ENCODE measurements at regions of chr21 and their contacts with region 1.

Region 1: DNA sequence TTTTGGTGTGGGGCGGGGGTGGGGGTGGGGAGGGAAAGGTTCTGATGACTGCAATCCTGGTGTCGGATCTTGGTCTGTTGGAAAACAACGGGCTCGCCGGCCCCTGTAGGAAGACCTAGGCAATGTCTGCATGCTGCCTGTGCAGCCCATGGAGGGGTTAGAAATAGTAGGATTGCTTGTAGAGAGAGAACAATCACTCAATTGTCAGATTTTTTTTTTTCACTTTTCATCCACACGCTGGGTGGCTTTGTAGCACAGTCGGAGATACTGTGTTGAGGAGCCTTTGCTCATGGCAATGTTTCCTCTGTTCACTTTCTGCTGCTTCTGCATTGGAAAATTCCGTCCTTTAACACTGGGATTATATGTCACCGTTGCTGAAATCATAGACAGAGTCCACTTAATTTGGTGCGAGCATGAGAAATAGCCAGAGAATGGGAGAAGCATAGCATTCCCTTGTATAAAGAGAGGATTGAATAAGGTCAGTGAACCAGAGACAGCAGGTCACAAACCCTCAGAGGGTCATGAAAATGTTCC is 107.5 kb downstream of the MRPS6 start:
- DNase-seq: no peak
- H3K4me3 ChIP-seq: no peak overlapping the region
- H3K27ac ChIP-seq: no peak overlapping the region
- H3K4me1 ChIP-seq: no peaks in the 10 kb centered on the region
- H3K27me3 ChIP-seq: no peaks in the 10 kb centered on the region
- CTCF ChIP-seq: no peak
- EP300 ChIP-seq: no peak
- POLR2A ChIP-seq: no peak

Region 2: GRCh38 chr21:33774551-33774950 is 406.3 kb before region 1 on chr21:
- intact Hi-C with region 1: loop called in 1 of 4 experiments (anchors 5 kb)
- DNase-seq: no peak
- H3K4me3 ChIP-seq: no peak overlapping the region
- H3K27ac ChIP-seq: no peak overlapping the region
- H3K4me1 ChIP-seq: no peaks in the 10 kb centered on the region
- H3K27me3 ChIP-seq: no peaks in the 10 kb centered on the region
- CTCF ChIP-seq: no peak
- EP300 ChIP-seq: no peak
- POLR2A ChIP-seq: no peak

Region 3: DNA sequence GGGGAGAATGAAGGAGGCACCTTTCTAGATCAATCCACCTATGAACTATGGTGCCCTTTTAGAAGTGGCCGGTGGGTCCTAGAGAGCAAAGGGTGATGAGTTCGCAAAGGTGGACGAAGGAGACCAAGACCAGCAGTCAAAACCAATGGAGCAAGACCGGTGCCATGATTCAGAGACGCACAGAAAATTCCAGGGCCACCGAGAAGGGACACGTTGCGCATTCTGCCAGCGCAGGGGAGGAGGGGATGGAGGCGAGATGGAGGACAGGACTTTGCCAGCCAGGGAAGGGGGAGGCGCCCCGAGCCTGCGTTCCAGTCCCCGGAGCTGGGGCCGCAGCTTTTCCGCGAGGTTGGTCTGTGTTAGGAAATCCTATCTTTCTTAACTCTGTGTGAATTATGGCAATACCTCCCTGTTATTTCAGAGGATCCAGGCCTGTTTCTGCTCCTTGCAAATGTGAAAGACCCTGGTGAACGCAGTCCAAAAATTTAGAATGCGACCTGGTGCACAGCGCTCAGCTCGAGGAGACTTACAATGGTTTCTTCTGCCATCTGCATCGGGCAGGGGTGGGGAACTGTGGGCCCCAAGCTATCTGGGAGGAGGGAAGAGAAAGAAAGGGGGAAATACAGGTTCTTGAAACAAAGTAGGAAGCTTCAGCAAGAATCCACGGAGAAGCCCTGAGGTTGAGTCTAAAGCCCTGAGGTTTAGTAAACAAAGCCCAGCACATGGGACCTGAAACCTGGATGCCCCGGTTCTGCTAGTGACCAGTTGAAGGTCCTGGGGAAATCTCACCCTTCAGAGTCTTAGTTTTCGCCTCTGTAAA is 21.9 kb after region 1 on chr21:
- intact Hi-C with region 1: no loop called
- DNase-seq: peak in 2 of 5 donors; percentile 31 to 43
- H3K4me3 ChIP-seq: no peak overlapping the region
- H3K27ac ChIP-seq: no peak overlapping the region
- H3K4me1 ChIP-seq: no peaks in the 10 kb centered on the region
- H3K27me3 ChIP-seq: no peaks in the 10 kb centered on the region
- CTCF ChIP-seq: no peak
- EP300 ChIP-seq: no peak
- POLR2A ChIP-seq: no peak